ENCODE measurements at regions of chr2 and their contacts with region 1.

Region 1: DNA sequence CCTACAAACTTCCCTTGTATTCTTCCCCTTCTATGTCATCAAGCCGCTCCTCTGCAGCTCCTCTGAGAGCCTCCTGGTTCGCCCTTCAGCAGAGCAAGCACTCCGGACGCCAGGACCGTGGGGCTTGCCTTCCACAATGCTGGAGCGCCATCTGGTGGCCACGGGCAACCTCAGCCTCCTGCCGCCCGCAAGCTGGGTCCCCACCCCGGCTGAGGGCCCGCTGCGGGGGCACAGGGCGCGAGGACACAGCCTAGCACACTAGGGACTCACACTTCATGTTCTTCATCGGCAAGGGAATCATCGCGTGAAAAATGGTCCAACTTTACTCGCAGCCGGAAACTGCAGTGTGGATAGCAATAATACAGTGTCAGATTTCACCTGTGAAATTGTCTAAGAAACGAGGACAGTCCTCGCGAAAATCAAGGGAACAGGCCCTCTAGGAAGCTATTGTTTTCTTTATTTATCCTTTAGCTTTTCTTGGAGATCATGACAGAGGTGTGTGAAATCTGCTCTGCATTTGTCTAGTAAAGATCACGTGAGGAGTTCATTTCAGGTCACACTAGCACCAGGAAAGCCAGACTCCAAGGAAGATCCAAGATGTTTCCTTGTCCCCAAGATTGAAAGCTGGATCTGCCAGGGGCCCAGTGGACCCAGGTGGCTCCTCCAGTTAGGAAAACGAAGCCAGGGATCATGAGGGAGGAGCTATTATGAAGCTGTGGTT is 5.8 kb downstream of the PRLH start:
- DNase-seq: peak; percentile 83 to 98
- H3K4me3 ChIP-seq: no peak overlapping the region
- H3K27ac ChIP-seq: no peak overlapping the region
- H3K4me1 ChIP-seq: peaks cover 0 to 8% (median 4%) of the 10 kb centered on the region in 4 experiments; a peak in 3 of 7 replicates
- H3K27me3 ChIP-seq: no peaks in the 10 kb centered on the region
- CTCF ChIP-seq: peak; percentile 98 to 99 (median 98)
- EP300 ChIP-seq: 0 out of 3 replicates have a peak, but pooled peaks of 1 of the 2 experiments have one; percentile 14
- POLR2A ChIP-seq: no peak
- RAD21 ChIP-seq: peak; percentile 99 to 100

Region 2: GRCh38 chr2:237421542-237422116 is 150.6 kb before region 1 on chr2:
- CTCF ChIA-PET with region 1: interaction called, 20 read pairs
- POLR2A ChIA-PET with region 1: interaction called, 3 read pairs
- DNase-seq: peak; percentile 65 to 92
- H3K4me3 ChIP-seq: no peak overlapping the region
- H3K27ac ChIP-seq: no peak overlapping the region
- H3K4me1 ChIP-seq: no peaks in the 10 kb centered on the region; a peak in 1 of 7 replicates
- H3K27me3 ChIP-seq: no peaks in the 10 kb centered on the region; a peak in 1 of 7 replicates
- CTCF ChIP-seq: peak; percentile 89 to 92 (median 89)
- EP300 ChIP-seq: no peak
- POLR2A ChIP-seq: no peak
- RAD21 ChIP-seq: peak; percentile 70 to 77

Region 3: GRCh38 chr2:237524631-237525030 is 47.5 kb before region 1 on chr2:
- CTCF ChIA-PET with region 1: interaction called, 14 read pairs
- POLR2A ChIA-PET with region 1: interaction called, 3 read pairs
- DNase-seq: no peak
- H3K4me3 ChIP-seq: no peak overlapping the region
- H3K27ac ChIP-seq: no peak overlapping the region
- H3K4me1 ChIP-seq: no peaks in the 10 kb centered on the region
- H3K27me3 ChIP-seq: no peaks in the 10 kb centered on the region
- CTCF ChIP-seq: no peak
- EP300 ChIP-seq: no peak
- POLR2A ChIP-seq: no peak
- RAD21 ChIP-seq: no peak

Region 4: DNA sequence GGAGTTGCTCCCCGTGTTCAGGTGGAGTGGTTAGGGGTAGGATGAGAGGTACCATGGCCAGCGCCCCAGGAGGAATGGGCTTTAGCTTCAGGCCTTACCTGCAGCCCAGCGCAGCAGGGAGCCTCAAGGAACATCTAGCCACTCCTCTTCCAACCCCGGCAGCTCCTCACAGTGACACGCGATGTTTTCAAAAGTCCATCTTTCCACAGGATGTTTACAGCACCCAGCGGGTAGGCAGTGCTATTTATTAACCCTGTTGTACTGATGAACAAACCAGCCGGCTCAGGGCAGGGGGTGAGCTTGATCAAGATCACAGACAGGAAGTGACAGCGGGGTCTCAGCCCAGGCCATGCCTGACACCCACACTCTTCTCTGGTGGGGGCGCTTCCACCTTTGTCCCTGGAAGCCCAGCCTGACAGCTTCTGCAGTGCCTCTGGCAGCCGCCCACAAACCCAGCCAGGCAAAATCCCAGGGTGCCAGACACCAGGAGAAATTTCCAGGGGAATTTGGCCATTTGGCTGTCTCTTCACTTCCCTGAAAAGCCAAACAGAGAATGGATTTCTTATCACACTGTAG is 24.3 kb before region 1 on chr2:
- CTCF ChIA-PET with region 1: interaction called, 32 read pairs
- POLR2A ChIA-PET with region 1: interaction called, 3 read pairs
- DNase-seq: no peak
- H3K4me3 ChIP-seq: no peak overlapping the region
- H3K27ac ChIP-seq: no peak overlapping the region
- H3K4me1 ChIP-seq: no peaks in the 10 kb centered on the region
- H3K27me3 ChIP-seq: no peaks in the 10 kb centered on the region; a peak in 1 of 7 replicates
- CTCF ChIP-seq: no peak
- EP300 ChIP-seq: no peak
- POLR2A ChIP-seq: no peak
- RAD21 ChIP-seq: no peak

Region 5: DNA sequence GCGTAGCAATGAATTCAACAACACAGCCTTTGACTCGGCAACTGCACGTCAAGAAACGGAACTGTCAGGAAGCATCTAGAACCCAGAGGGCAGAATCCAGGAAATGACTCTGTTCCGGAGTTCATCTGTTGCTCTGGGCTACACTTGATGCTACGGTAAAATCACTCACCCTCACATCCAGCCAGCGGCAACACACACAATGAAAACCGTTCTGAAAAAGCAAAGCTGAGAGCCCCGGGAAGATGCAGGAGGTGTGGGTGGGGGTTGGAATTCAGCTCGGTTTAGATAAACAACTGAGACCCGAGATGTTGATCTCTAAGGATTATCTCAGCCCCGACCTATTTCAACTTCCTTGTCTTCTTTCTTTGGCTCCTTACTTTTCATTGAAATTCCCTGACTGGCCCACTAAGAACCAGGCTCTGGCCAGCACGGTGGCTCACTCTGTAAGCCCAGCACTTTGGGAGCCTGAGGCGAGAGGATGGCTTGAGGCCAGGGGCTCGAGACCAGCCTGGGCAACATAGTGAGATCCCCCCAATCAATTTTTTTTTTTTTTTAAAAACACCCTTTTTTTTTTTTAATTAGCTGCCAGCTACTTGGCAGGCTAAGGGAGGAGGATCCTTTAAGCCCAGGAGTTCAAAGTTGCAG is 31.7 kb after region 1 on chr2:
- CTCF ChIA-PET with region 1: interaction called, 17 read pairs
- POLR2A ChIA-PET with region 1: interaction called, 4 read pairs
- DNase-seq: no peak
- H3K4me3 ChIP-seq: no peak overlapping the region
- H3K27ac ChIP-seq: no peak overlapping the region
- H3K4me1 ChIP-seq: peaks cover 0 to 14% (median 5%) of the 10 kb centered on the region in 4 experiments; a peak in 4 of 7 replicates
- H3K27me3 ChIP-seq: no peaks in the 10 kb centered on the region
- CTCF ChIP-seq: no peak
- EP300 ChIP-seq: no peak
- POLR2A ChIP-seq: no peak
- RAD21 ChIP-seq: no peak

Region 6: GRCh38 chr2:237874585-237875161 is 302.5 kb after region 1 on chr2:
- CTCF ChIA-PET with region 1: no interaction called
- POLR2A ChIA-PET with region 1: no interaction called
- DNase-seq: no peak
- H3K4me3 ChIP-seq: no peak overlapping the region
- H3K27ac ChIP-seq: no peak overlapping the region
- H3K4me1 ChIP-seq: no peaks in the 10 kb centered on the region; a peak in 3 of 7 replicates
- H3K27me3 ChIP-seq: no peaks in the 10 kb centered on the region
- CTCF ChIP-seq: no peak
- EP300 ChIP-seq: no peak
- POLR2A ChIP-seq: no peak
- RAD21 ChIP-seq: no peak